ENCODE measurements at regions of chr12 and their contacts with region 1.

Region 1: GRCh38 chr12:4526923-4527546 is 11.7 kb upstream of the RAD51AP1 start:
- DNase-seq: peak; percentile 29
- H3K4me3 ChIP-seq: no peak overlapping the region
- H3K27ac ChIP-seq: no peak overlapping the region
- H3K4me1 ChIP-seq: peaks cover 17% of the 10 kb centered on the region
- CTCF ChIP-seq: peak; percentile 84

Region 2: DNA sequence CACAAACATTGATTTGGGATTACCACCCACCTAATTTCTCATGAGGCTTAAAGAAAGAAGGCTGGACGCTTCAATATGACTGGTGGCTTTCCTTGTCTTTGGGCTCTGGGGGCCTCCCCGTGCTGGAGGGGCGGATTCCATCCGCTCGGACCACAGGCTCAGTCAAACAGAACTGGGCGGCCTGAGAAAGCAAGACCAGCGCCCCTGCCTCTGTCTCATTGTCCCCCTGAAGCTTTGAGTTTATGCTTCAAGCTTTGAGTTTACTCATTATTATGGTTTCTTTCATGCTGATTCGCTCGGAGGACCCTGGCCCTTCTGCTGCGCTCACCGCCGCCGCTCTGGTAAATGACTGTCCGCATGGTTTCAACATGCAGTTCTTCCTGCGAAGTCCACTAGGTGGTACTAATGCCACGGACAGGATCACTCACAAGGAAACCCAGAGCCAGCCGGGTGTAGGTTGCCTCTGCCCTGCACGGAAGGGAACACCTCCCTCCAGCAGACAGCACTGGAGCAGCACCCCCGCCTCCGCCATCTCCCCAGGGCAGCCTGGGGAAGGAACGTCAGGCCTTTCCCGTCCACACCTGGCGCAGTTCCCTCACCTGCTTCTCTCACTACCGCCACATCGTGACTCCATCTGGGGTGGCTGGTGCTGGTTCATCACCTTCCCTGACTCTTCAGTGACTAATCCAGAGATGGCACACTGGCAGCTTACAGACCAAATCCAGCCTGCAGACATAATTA is 219.3 kb before region 1 on chr12:
- CTCF ChIA-PET with region 1: no interaction called
- POLR2A ChIA-PET with region 1: no interaction called
- intact Hi-C with region 1: loop called (anchors 5 kb)
- DNase-seq: peak; percentile 33
- H3K4me3 ChIP-seq: no peak overlapping the region
- H3K27ac ChIP-seq: no peak overlapping the region
- H3K4me1 ChIP-seq: no peaks in the 10 kb centered on the region
- CTCF ChIP-seq: peak; percentile 63

Region 3: GRCh38 chr12:4353785-4354208 is 173.2 kb before region 1 on chr12:
- CTCF ChIA-PET with region 1: no interaction called
- POLR2A ChIA-PET with region 1: no interaction called
- intact Hi-C with region 1: loop called (anchors 5 kb)
- DNase-seq: peak; percentile 45
- H3K4me3 ChIP-seq: no peak overlapping the region
- H3K27ac ChIP-seq: no peak overlapping the region
- H3K4me1 ChIP-seq: no peaks in the 10 kb centered on the region
- CTCF ChIP-seq: peak; percentile 72

Region 4: DNA sequence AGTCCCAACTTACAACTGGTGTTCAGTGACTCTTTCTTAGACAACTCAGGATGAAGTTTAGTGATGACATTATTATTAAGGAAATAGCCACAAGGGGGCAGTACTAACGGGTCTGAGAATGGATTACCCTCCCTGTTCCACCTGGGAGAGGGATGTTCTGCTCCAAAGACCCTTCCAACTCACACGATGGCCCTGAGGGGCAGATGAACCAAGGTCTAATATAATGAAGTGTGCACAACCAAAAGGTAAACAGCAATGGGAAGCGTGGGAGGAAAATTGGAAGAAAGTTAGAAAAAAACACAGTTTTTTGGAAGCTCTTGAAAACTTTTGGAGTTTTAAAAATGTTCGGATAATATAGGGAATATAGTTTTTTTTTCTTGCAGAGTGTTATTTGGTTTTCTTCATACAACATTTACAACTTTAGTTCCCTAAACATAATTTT is 105.4 kb before region 1 on chr12:
- CTCF ChIA-PET with region 1: no interaction called
- POLR2A ChIA-PET with region 1: no interaction called
- intact Hi-C with region 1: loop called (anchors 1 kb)
- DNase-seq: peak; percentile 60
- H3K4me3 ChIP-seq: no peak overlapping the region
- H3K27ac ChIP-seq: no peak overlapping the region
- H3K4me1 ChIP-seq: no peaks in the 10 kb centered on the region
- CTCF ChIP-seq: peak; percentile 93

Measured in OCI-LY7 (cell line).